Panc1 (cell line): ENCODE measurements at regions of chr15 and their contacts with region 1.

Region 1: DNA sequence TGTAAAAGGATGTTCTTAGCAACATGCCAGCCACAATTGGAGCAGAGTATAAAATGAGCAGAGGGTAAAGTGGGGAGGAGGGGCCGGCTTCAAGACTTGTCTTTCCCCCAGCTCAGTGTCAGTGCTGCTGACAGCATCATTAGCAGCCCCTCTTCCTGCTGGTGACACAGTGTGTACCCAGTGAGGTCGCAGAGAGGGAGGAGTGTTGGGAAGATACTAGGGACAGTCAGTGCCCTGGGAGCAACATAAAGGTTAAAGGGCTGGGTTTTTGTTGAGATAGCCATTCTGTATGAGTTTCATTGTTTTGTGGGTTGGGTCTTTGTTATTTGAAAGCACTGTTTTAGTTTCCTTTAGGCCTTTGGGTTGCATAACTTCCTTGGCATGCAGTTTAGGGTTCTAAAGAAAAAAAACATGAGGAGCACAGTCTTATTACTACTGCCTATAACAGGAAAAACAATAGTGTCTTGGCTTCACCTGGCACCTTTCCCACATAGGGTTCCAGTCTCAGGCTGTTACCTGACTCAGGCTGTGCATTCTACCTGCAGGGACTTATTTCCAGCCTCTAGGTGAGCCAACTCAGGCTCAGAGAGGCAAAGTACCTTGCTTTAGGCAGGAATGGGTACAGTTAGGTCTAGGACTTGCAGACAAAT is 94.1 kb upstream of the SKOR1 start:
- DNase-seq: no peak
- ATAC-seq: no peak
- H3K4me3 ChIP-seq: no peak overlapping the region
- H3K27ac ChIP-seq: no peak overlapping the region
- H3K4me1 ChIP-seq: no peaks in the 10 kb centered on the region
- H3K27me3 ChIP-seq: no peaks in the 10 kb centered on the region
- CTCF ChIP-seq: no peak

Region 2: GRCh38 chr15:67578020-67578600 is 153.1 kb before region 1 on chr15:
- CTCF ChIA-PET with region 1: interaction called, 14 read pairs
- POLR2A ChIA-PET with region 1: no interaction called
- in situ Hi-C with region 1: no loop called
- intact Hi-C with region 1: no loop called
- DNase-seq: no peak
- ATAC-seq: no peak
- H3K4me3 ChIP-seq: no peak overlapping the region
- H3K27ac ChIP-seq: no peak overlapping the region
- H3K4me1 ChIP-seq: peaks cover 3% of the 10 kb centered on the region; the same call in 1 of the 2 replicates
- H3K27me3 ChIP-seq: no peaks in the 10 kb centered on the region
- CTCF ChIP-seq: no peak

Region 3: DNA sequence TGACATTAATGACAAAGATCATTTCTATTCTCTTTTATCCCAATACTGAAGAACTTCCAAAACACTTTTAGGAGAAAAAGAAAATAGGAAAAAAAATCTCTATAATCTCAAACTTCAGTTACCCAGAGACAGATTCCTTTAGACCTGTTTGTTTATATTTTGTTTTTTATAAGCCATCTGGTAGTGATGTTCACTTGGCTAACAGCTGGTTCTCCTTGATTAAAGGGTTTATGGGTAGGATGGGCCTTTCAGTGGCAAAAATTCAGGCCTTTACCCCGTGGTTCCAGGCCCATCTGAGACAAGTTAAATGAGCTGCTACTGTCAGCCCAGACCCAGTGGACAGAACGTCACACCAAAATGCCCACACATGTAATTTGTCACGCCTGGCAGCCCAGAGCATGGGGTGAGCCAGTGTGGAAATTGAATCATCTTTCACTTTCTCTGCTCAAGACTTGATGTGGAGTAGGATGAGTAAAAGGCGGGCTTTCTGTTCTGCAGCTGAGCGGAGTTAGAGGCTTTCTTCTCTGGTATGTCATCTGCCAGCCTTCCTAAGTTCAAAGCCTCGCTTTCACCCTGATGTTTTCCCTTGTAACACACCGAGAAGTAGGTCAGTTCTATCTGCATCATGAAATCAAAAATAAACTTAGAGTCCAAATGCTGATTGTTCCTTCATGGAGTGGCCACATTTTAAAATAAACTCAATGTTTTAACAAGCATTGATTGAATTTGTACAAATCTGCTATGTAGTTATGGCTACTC is 31.6 kb after region 1 on chr15:
- CTCF ChIA-PET with region 1: no interaction called
- POLR2A ChIA-PET with region 1: interaction called, 10 read pairs
- in situ Hi-C with region 1: no loop called
- intact Hi-C with region 1: no loop called
- DNase-seq: no peak
- ATAC-seq: no peak
- H3K4me3 ChIP-seq: no peak overlapping the region
- H3K27ac ChIP-seq: no peak overlapping the region
- H3K4me1 ChIP-seq: no peaks in the 10 kb centered on the region
- H3K27me3 ChIP-seq: no peaks in the 10 kb centered on the region
- CTCF ChIP-seq: no peak